Upper lobe of right lung (tissue), 1 donor: ENCODE measurements at regions of chrX and their contacts with region 1.

Region 1: DNA sequence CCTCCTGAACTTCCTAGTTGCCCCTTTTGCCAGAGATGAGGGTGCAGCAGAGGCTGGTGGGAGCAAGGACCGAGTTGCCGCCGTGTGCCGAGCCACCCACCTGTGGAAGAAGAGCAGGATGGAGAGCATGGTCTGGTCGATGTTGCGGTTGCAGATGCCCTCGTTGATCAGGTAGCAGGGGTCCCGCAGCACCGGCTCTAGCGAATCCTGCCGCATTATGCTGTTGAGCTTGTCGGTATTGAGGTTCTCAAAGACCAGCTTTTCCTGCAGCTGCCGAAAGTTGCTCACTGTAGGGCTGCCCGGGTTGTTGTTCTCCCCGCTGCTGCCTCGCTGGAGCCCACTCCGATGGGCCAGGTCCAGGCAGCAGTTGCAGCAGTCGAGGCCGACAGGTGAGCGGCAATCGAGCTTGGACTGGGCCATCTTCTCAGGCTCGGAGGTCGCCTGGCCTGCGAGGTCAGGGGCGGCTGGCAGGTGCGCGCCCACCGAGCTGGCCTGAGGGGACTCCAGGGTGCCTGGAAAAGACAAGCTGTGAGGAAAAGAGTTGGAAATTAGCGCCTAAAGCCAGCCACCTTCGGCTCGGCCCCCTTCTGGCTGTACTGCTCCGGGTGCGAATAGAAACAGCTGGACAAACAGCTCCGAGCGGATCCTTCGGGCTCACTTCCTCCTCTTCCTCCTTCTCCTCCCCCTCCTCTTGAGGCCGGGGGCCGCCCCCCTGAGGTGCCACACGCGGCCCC is 420 bp downstream of the TSC22D3 start:
- DNase-seq: no peak
- ATAC-seq: no peak
- H3K4me3 ChIP-seq: peak overlapping the region; percentile 60
- H3K27ac ChIP-seq: peak overlapping the region; percentile 80
- H3K4me1 ChIP-seq: peaks cover 5% of the 10 kb centered on the region
- H3K27me3 ChIP-seq: no peaks in the 10 kb centered on the region
- CTCF ChIP-seq: no peak

Region 2: GRCh38 chrX:107716816-107717700 is 58.1 kb before region 1 on chrX:
- intact Hi-C with region 1: loop called (anchors 5 kb)
- DNase-seq: peak; percentile 90
- ATAC-seq: peak; percentile 79
- H3K4me3 ChIP-seq: peak overlapping the region; percentile 72
- H3K27ac ChIP-seq: peak overlapping the region; percentile 98
- H3K4me1 ChIP-seq: peaks cover 26% of the 10 kb centered on the region
- H3K27me3 ChIP-seq: no peaks in the 10 kb centered on the region
- CTCF ChIP-seq: no peak